ENCODE measurements at regions of chr6 and their contacts with region 1.

Region 1: DNA sequence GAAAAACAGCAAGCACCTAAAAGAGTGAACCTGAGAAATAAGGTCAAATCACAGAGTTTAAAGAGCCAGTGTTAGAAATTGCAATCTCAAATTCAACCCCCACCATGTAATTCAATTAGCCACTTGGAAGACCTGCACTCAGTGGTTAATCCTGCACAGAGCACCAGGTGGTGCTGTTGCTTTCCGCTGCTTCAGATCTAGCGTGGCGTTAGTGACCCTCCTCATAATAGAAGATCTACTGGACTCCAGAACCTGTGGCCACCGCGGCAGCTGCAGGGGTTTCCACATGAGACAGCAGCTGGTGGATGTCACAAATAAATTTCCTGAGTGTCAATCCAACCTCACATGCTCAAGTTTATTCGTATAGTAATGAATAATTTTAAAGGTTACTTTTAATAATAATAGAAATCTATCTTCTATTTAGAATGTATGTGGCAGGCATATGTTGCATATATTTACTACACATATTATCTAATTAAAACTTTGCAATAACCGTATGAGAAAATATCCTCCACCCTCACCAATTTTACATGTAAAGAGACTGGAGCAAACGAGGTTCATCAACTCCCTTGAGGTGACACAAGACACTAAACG is 84.4 kb downstream of the SYNE1 start:
- DNase-seq: peak; percentile 55
- ATAC-seq: peak; percentile 57
- H3K4me3 Mint-ChIP-seq: no peak overlapping the region
- H3K27ac Mint-ChIP-seq: no peak overlapping the region
- H3K4me1 Mint-ChIP-seq: no peaks in the 10 kb centered on the region
- H3K27me3 Mint-ChIP-seq: peaks cover 9% of the 10 kb centered on the region

Region 2: DNA sequence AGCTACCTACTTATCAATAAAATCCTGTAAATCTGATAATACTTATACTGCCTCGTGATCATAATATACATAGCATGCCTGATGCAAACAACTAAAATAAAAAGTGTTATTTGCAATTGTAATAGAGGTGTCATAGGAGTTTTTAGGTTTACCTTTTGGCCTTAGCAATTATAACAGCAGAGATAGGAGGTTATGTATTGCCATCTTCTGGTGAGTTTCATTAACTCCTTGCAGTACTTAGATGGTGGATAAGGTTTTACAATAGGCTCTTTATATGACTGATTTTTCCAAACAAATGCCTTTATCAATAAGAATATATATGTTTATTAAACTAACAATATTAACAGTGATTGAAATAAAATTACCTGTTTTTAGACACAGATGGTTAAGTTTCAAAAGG is 117.2 kb after region 1 on chr6:
- CTCF ChIA-PET with region 1: interaction called, 4 read pairs
- POLR2A ChIA-PET with region 1: no interaction called
- intact Hi-C with region 1: loop called in 1 of 2 experiments (anchors 1 kb)
- DNase-seq: no peak
- ATAC-seq: no peak
- H3K4me3 Mint-ChIP-seq: no peak overlapping the region
- H3K27ac Mint-ChIP-seq: no peak overlapping the region
- H3K4me1 Mint-ChIP-seq: no peaks in the 10 kb centered on the region
- H3K27me3 Mint-ChIP-seq: peaks cover 12% of the 10 kb centered on the region

Region 3: DNA sequence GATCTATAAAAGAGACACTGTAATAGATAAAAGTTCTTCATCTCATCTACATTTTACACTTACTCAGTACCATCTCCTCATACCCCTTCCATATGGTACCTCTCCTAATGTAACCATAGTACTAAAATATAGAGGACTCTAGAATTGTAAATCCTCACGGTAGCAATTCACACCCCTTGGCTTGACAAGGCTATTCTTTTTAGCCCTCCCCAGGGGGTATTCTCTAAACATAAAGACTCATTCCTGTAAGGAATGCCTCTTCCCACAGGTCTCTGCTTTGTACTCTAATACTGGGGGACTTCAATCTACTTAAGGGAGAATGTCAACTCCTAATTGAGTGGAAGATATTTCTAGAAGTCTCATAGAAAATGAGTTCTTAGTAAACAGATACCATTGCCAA is 283.8 kb after region 1 on chr6:
- CTCF ChIA-PET with region 1: no interaction called
- POLR2A ChIA-PET with region 1: no interaction called
- intact Hi-C with region 1: no loop called
- DNase-seq: no peak
- ATAC-seq: no peak
- H3K4me3 Mint-ChIP-seq: no peak overlapping the region
- H3K27ac Mint-ChIP-seq: no peak overlapping the region
- H3K4me1 Mint-ChIP-seq: no peaks in the 10 kb centered on the region
- H3K27me3 Mint-ChIP-seq: peaks cover 5% of the 10 kb centered on the region